Endothelial cell of umbilical vein (primary cell): ENCODE measurements at regions of chr7 and their contacts with region 1.

Region 1: DNA sequence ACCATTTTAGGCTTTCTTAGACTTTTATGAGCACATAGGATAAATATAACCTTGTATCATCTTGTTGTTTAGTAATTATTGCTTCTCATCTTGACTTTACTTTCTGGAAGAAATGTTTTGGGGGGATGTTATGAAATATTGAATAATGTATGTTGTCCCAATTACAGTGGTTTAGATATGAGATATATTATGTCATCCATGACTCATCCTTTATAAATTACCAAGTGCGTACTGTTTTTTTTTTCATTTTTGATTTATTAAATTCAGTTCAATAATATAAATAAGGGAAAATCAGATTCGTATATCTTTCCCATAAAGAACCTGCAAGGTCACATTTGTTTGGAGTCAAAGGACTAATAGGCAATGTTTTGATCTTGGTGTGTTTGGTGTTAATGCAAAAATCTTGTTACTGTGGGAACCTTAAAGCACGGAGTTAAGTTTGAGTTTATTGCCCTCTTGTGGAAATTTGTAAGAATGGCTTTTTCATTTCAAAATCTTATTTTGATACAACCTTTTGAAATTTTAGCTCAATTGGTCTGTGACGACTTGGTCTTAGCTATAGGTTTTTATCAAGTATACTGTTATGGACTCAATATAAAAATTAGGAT is 108.6 kb downstream of the SRI start:
- DNase-seq: peak; percentile 65
- H3K4me3 ChIP-seq: no peak overlapping the region
- H3K27ac ChIP-seq: no peak overlapping the region
- H3K4me1 ChIP-seq: no peaks in the 10 kb centered on the region
- H3K27me3 ChIP-seq: no peaks in the 10 kb centered on the region
- CTCF ChIP-seq: peak; percentile 32 to 36
- POLR2A ChIP-seq: no peak

Region 2: GRCh38 chr7:87628780-87629569 is 482.3 kb before region 1 on chr7:
- CTCF ChIA-PET with region 1: interaction called, 4 read pairs
- POLR2A ChIA-PET with region 1: no interaction called
- dilution Hi-C with region 1: no loop called
- intact Hi-C with region 1: loop called (anchors 10 kb)
- DNase-seq: peak; percentile 13
- H3K4me3 ChIP-seq: peak overlapping the region; percentile 44 to 53 (median 49)
- H3K27ac ChIP-seq: no peak overlapping the region
- H3K4me1 ChIP-seq: peaks cover 4% of the 10 kb centered on the region
- H3K27me3 ChIP-seq: peaks cover 0 to 2% of the 10 kb centered on the region in 2 experiments
- CTCF ChIP-seq: no peak
- POLR2A ChIP-seq: no peak

Region 3: DNA sequence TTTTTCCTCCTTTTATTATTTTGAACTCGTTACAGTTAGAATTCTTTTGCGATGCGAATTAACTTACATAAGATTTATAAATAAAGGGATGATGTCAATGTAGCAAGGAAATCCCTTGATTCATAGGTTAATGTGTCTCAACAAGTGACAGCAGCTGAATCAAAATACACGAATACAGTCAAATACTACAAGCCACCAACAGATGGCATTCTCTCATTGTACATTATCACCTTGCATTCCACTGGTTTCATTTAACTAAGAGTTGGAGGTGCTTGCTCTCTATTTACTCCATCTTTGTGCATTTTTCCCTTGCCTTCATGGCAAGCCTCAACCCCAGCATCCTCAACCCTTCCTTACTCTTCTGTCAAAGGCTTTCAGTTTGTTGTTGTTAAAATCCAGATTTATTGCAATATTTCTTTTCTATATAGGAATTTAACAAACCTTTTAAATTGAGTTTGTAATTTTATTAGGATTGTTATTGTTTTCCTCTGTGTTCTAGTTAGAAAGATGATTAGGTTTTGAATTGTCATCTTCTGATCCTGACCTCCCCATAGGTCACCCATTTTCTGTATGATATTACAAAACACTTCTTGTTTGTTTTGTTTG is 313.3 kb before region 1 on chr7:
- CTCF ChIA-PET with region 1: interaction called, 38 read pairs
- POLR2A ChIA-PET with region 1: no interaction called
- dilution Hi-C with region 1: no loop called
- intact Hi-C with region 1: loop called (anchors 1 kb)
- DNase-seq: peak; percentile 73
- H3K4me3 ChIP-seq: no peak overlapping the region
- H3K27ac ChIP-seq: no peak overlapping the region
- H3K4me1 ChIP-seq: no peaks in the 10 kb centered on the region
- H3K27me3 ChIP-seq: no peaks in the 10 kb centered on the region
- CTCF ChIP-seq: peak; percentile 44 to 56
- POLR2A ChIP-seq: no peak

Region 4: DNA sequence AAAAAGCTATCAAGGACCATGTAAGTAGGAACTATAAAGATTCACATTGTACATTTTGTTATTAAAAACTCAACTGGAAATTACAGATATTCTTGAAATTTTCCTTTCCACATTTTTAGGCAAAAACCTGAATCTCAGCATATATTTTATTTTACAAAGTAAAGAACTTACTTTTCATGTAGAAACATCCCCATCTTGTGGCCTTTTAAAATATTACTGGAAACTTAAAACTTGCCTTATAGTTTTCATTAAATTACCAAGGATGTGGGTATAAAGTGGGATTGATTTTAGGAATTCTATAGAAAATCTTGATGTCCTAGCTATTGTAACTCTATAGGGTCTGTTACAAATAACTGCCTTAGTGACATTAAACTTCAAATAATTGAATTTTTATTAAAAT is 224.4 kb before region 1 on chr7:
- CTCF ChIA-PET with region 1: interaction called, 6 read pairs
- POLR2A ChIA-PET with region 1: no interaction called
- dilution Hi-C with region 1: no loop called
- intact Hi-C with region 1: loop called (anchors 5 kb)
- DNase-seq: peak; percentile 56
- H3K4me3 ChIP-seq: no peak overlapping the region
- H3K27ac ChIP-seq: no peak overlapping the region
- H3K4me1 ChIP-seq: no peaks in the 10 kb centered on the region
- H3K27me3 ChIP-seq: no peaks in the 10 kb centered on the region
- CTCF ChIP-seq: peak; percentile 3 to 9
- POLR2A ChIP-seq: no peak

Region 5: GRCh38 chr7:87933945-87934698 is 177.1 kb before region 1 on chr7 and contains the start of gene ADAM22:
- CTCF ChIA-PET with region 1: interaction called, 3 read pairs
- POLR2A ChIA-PET with region 1: no interaction called
- dilution Hi-C with region 1: no loop called
- intact Hi-C with region 1: loop called (anchors 5 kb)
- DNase-seq: peak; percentile 89
- H3K4me3 ChIP-seq: peak within 1 kb of the TSS; percentile 7 to 66 (median 55)
- H3K27ac ChIP-seq: no peak within 1 kb of the TSS
- H3K4me1 ChIP-seq: peaks cover 11% of the 10 kb centered on the region
- H3K27me3 ChIP-seq: peaks cover 5 to 18% of the 10 kb centered on the region in 2 experiments
- CTCF ChIP-seq: no peak
- POLR2A ChIP-seq: no peak
- total RNA-seq, gene ADAM22: 0.53 and 1.4 TPM in 2 replicates

Region 6: DNA sequence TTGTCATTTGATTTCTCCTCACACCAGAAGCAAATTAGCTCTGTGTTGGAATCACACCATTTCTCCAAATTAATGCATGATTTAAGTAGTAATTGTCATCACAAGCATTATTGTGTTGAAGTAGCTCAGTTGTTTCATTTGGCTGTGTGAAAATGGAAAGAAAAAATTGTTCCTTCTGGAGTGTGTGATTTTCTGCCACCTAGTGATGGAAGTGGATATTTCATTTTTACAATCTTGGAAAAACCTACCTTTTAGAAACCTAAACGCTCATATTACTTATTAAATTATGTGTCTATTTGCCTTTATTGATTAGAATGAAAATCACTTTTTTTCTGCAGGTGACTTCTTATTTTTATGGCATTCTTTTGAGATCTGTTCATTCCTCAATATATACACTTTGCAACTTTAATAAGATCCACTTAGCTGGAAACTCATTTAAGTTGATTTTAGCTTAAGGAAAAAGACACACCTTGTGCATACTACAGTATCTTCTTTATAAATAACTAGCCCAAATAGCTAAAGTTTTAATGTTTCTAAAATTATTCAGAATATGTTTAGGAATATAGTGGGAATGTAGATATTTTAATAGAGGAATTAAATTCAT is 58.6 kb after region 1 on chr7:
- CTCF ChIA-PET with region 1: interaction called, 12 read pairs
- POLR2A ChIA-PET with region 1: no interaction called
- dilution Hi-C with region 1: no loop called
- intact Hi-C with region 1: no loop called
- DNase-seq: peak; percentile 40
- H3K4me3 ChIP-seq: no peak overlapping the region
- H3K27ac ChIP-seq: no peak overlapping the region
- H3K4me1 ChIP-seq: no peaks in the 10 kb centered on the region
- H3K27me3 ChIP-seq: no peaks in the 10 kb centered on the region
- CTCF ChIP-seq: peak; percentile 17 to 33
- POLR2A ChIP-seq: no peak